T-cell (primary cell): ENCODE measurements at regions of chr2 and their contacts with region 1.

Region 1: DNA sequence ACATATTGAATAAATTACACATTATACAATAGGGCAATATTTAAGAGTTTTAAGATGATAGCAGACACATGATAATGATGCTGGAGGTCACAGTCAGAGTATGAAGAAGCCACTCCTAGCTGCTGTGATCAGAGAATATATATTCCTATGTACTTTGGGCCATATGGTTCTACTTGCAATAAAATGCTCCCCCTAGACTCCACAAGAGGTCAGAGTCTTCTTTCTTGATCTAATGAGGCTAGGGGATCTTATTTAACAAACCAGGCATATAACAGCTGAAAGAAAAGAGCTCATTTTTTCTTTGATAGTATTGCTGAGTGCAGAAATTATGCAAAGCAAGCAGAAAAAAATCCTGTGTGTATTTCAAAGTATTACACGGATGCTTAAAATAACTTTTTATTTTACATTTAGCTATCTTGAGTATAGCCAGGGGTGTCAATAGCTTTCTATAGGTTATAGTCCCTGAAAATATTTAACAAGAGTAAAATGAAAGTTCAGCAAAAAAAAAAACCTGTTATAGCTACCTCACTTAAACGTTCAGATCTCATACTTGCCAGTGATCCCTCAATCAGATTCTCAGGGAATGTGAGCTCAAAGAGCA is 748.7 kb upstream of the CHAC2 start:
- DNase-seq: no peak
- ATAC-seq: no peak
- H3K4me3 ChIP-seq: no peak overlapping the region
- H3K4me3 Mint-ChIP-seq: no peak overlapping the region
- H3K27ac ChIP-seq: no peak overlapping the region
- H3K27ac Mint-ChIP-seq: no peak overlapping the region
- H3K4me1 ChIP-seq: no peaks in the 10 kb centered on the region
- H3K4me1 Mint-ChIP-seq: no peaks in the 10 kb centered on the region
- H3K27me3 ChIP-seq: no peaks in the 10 kb centered on the region
- H3K27me3 Mint-ChIP-seq: no peaks in the 10 kb centered on the region

Region 2: GRCh38 chr2:52805901-52806410 is 213.0 kb before region 1 on chr2:
- CTCF ChIA-PET with region 1: interaction called in 1 of 2 experiments, 10 read pairs
- POLR2A ChIA-PET with region 1: no interaction called
- DNase-seq: no peak
- ATAC-seq: no peak
- H3K4me3 ChIP-seq: no peak overlapping the region
- H3K4me3 Mint-ChIP-seq: no peak overlapping the region
- H3K27ac ChIP-seq: no peak overlapping the region
- H3K27ac Mint-ChIP-seq: no peak overlapping the region
- H3K4me1 ChIP-seq: no peaks in the 10 kb centered on the region
- H3K4me1 Mint-ChIP-seq: no peaks in the 10 kb centered on the region
- H3K27me3 ChIP-seq: no peaks in the 10 kb centered on the region
- H3K27me3 Mint-ChIP-seq: no peaks in the 10 kb centered on the region

Region 3: DNA sequence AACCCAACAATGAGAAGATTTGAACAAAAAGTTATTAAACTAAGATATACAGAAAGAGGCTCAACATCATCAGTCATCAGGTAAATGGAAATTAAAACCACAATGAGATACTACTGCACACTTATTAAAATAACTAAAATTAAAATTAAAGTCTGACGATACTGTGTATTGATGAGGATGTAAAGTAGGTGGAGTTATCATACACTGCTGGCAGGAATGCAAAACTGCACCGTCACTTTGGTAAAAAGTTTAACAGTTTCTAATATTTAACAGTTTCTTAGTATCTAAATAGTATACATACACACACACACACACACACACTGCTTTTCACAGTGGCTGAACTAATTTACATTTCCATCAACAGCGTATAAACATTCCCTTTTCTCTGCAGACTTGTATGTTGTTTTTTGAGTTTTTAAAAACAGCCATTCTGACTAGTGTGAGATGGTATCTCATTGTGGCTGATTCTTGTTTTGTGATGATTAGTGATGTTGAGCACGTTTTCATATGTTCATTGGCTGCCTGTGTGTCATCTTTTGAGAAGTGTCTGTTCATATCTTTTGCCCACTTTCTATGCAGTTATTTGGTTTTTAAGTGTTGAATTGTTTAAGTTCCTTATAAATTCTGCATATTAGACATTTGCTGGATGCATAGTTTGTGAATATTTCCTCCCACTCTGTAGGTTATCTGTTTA is 21.8 kb after region 1 on chr2:
- CTCF ChIA-PET with region 1: no interaction called
- POLR2A ChIA-PET with region 1: no interaction called
- DNase-seq: no peak
- ATAC-seq: no peak
- H3K4me3 ChIP-seq: no peak overlapping the region
- H3K4me3 Mint-ChIP-seq: no peak overlapping the region
- H3K27ac ChIP-seq: no peak overlapping the region
- H3K27ac Mint-ChIP-seq: no peak overlapping the region
- H3K4me1 ChIP-seq: no peaks in the 10 kb centered on the region
- H3K4me1 Mint-ChIP-seq: no peaks in the 10 kb centered on the region
- H3K27me3 ChIP-seq: no peaks in the 10 kb centered on the region
- H3K27me3 Mint-ChIP-seq: no peaks in the 10 kb centered on the region